Endothelial cell of umbilical vein (primary cell): ENCODE measurements at regions of chr3 and their contacts with region 1.

Region 1: DNA sequence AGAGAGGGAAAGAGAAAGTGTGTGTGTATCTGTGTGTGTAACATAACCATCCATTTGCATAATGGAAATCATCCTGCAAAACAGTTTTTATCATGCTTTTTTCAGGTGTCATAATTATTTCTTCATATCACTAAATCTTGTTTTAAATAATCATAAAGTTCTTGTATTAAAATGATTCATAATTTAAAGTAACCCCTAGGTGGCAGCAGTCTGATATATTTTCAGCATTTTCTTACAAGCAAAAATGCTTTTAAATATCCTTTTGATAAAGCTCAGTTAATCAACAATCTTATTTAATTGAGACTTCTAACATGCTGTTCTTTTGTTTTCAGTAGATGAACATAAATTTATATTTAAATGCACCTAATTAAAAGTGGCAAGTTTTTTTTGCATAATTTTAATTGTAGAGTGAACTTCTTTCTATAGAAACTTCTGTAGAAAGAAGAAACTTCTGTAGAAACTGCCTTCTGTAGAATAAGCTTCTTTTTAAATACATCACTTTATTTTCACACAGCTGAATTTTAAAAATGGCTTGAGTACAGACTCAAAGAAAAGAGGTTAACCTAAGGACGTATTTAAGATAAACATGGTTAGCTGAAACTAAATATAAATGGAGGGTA is 72.5 kb downstream of the OPA1 start:
- DNase-seq: peak; percentile 57
- H3K4me3 ChIP-seq: no peak overlapping the region
- H3K27ac ChIP-seq: no peak overlapping the region
- H3K4me1 ChIP-seq: no peaks in the 10 kb centered on the region
- H3K27me3 ChIP-seq: no peaks in the 10 kb centered on the region
- CTCF ChIP-seq: peak in 1 of 2 donors; percentile 22
- POLR2A ChIP-seq: no peak

Region 2: DNA sequence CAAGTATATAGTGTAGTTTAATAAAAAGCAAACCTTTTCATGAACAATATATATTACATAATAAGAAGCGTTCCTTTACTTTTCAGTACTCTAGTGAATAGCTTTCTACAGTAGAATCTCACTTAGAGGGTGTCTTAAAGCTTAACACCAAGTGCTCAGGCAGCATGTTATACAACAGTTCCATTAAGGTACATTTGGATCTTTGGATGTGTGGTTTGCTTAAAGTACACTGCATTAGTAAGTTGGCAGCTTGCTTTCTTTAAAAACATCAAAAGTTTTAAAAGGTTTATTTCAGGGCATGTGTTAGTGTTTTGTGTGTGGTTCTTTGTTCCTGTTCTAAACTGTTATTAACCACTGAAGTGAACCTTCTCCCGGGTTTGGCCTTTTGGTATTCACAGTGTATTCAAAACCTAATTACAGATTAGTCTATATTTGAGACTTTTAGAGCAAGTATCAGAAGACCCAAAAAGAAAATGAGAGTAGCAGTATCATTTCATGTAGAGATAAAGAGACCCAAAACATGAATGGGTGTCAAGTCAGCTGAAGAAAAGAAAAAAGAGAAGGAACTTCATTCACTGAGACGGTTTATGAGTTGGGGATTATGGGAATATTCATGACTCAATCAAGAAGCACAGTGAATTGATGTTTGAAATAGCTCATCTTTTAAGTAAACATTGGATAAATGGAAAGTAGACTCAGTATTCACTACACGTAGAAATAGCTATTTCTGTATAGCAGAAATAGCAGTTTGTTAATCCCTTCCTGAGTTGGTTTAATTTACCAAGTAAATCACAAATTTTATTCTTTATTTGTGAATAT is 21.4 kb after region 1 on chr3:
- CTCF ChIA-PET with region 1: interaction called, 14 read pairs
- POLR2A ChIA-PET with region 1: no interaction called
- dilution Hi-C with region 1: no loop called
- intact Hi-C with region 1: no loop called
- DNase-seq: no peak
- H3K4me3 ChIP-seq: no peak overlapping the region
- H3K27ac ChIP-seq: no peak overlapping the region
- H3K4me1 ChIP-seq: no peaks in the 10 kb centered on the region
- H3K27me3 ChIP-seq: no peaks in the 10 kb centered on the region
- CTCF ChIP-seq: no peak
- POLR2A ChIP-seq: no peak

Region 3: DNA sequence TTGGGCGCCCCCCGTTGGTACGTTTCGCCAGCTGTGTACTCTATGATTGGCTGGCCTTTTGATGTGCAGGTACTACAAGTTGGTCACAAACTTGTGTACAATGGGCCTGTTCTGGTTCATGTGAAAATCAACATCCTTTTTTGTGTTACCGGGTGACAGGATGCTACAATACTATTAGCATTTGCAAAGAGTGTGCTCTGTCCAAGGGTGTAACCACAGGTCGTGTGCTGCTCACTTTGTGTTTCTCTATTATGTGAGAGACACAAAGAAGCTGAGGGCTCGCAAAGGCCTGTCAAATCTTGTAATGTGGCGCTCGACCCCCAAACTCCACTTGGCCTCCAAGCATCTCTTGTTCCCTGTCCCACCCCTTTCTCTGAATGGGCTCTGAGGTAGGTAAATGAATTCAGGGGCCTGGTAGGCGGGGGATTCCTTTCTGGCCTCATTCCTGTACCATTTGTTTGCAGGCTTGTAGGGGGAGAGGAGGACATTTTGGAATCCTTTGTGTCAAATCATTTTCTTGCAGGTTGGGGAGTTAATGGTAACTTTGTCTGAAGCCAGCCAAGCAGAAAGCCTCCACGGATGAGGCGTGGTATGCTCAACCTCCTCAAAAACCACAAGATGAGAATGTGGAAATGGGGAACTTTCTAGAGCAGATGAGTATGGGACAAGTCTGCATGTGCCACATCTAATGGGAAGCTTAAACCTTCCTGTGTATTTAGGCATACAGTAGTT is 36.6 kb after region 1 on chr3:
- CTCF ChIA-PET with region 1: no interaction called
- POLR2A ChIA-PET with region 1: no interaction called
- dilution Hi-C with region 1: no loop called
- intact Hi-C with region 1: no loop called
- DNase-seq: no peak
- H3K4me3 ChIP-seq: no peak overlapping the region
- H3K27ac ChIP-seq: no peak overlapping the region
- H3K4me1 ChIP-seq: no peaks in the 10 kb centered on the region
- H3K27me3 ChIP-seq: no peaks in the 10 kb centered on the region
- CTCF ChIP-seq: no peak
- POLR2A ChIP-seq: no peak

Region 4: GRCh38 chr3:194323785-194324735 is 658.6 kb after region 1 on chr3:
- CTCF ChIA-PET with region 1: interaction called, 10 read pairs
- POLR2A ChIA-PET with region 1: no interaction called
- dilution Hi-C with region 1: no loop called
- intact Hi-C with region 1: no loop called
- DNase-seq: no peak
- H3K4me3 ChIP-seq: no peak overlapping the region
- H3K27ac ChIP-seq: no peak overlapping the region
- H3K4me1 ChIP-seq: no peaks in the 10 kb centered on the region
- H3K27me3 ChIP-seq: no peaks in the 10 kb centered on the region
- CTCF ChIP-seq: no peak
- POLR2A ChIP-seq: no peak

Region 5: DNA sequence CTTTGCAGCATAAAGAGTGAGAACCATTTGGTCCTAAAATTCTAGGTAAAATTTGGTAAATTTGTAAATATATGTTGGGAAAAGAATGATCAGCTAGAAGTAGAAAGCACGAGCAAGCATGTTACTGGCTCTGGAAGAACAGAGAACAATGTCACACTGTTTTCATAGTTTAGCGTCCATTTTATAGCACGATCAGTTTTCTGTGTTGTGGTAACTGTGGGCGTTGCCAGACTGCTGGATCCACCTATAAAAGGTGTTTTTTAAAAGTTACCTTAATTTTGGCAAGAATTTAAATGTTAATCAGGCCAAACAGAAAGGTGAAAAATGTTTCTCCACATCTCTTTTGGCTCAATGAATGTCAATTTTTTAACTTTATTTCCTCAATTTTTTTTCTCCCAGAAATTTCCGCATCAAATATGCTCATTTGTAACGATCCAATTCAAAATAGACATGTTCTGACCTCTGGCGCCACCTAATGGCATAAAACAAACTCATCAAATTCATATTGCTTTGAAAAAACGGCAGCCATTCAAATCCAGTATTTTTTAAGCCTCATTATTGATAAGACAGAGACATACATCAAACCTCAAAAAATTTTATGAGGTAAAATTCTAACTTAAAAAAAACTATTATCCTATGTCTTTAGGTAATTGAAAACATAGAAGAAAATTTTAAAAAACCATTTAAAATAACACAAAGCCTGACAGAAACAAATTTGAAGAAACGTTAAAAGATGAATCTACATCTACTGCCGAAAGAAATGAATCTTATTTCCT is 739.1 kb after region 1 on chr3:
- CTCF ChIA-PET with region 1: interaction called, 12 read pairs
- POLR2A ChIA-PET with region 1: no interaction called
- dilution Hi-C with region 1: no loop called
- intact Hi-C with region 1: loop called (anchors 1 kb)
- DNase-seq: peak; percentile 69
- H3K4me3 ChIP-seq: no peak overlapping the region
- H3K27ac ChIP-seq: no peak overlapping the region
- H3K4me1 ChIP-seq: no peaks in the 10 kb centered on the region
- H3K27me3 ChIP-seq: peaks cover 0 to 1% of the 10 kb centered on the region in 2 experiments
- CTCF ChIP-seq: peak; percentile 36 to 49
- POLR2A ChIP-seq: no peak